Right ventricle myocardium inferior (tissue), 1 donor: ENCODE measurements at regions of chr6 and their contacts with region 1.

Region 1: GRCh38 chr6:53492860-53493634 is 51.9 kb downstream of the GCLC start:
- DNase-seq: no peak
- ATAC-seq: peak; percentile 68

Region 2: GRCh38 chr6:53447869-53448268 is 45.2 kb before region 1 on chr6:
- intact Hi-C with region 1: no loop called
- DNase-seq: no peak
- ATAC-seq: no peak

Region 3: GRCh38 chr6:53544470-53545308 is 51.6 kb after region 1 on chr6 and contains the start of gene GCLC:
- intact Hi-C with region 1: loop called (anchors 2 kb)
- DNase-seq: peak; percentile 98
- ATAC-seq: peak; percentile 84
- total RNA-seq, gene GCLC: 26.7 TPM

Region 4: GRCh38 chr6:53651764-53652401 is 158.8 kb after region 1 on chr6:
- intact Hi-C with region 1: loop called (anchors 5 kb)
- DNase-seq: peak; percentile 86
- ATAC-seq: peak; percentile 73

Region 5: DNA sequence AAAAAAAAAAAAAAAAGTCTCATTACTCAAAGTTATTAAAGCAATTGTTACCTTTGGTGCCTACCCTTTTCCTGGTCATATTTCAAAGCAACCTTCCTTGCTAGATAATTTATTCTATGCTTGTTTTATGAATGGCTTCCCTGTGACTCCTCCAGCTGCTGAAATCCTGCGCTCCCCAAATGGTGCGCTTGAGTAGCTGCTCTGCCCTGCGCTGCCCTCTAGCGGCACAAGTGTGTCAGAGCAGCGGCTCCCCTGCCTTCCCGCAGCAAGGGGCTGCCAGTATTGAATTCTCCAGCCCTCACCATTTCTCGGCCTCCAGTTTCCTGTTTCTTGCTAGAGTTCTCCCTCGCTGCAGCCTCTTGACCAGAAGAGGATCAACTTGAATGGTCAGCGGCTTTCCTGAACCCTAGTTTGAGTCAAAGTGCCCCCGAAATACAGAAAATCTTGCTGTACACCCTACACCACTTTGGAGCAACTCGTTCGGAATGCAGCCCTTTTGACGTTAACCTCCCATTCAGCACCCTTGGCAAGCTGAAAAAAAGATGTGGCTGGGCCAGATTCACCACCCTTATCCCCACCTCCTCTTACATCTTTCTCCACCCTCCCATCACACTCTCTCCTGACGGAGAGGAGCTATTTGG is 232.9 kb after region 1 on chr6:
- intact Hi-C with region 1: loop called (anchors 2 kb)
- DNase-seq: peak; percentile 88
- ATAC-seq: peak; percentile 82

Region 6: GRCh38 chr6:53956068-53956711 is 463.1 kb after region 1 on chr6:
- intact Hi-C with region 1: loop called (anchors 5 kb)
- DNase-seq: peak; percentile 72
- ATAC-seq: peak; percentile 87